ENCODE measurements at regions of chr7 and their contacts with region 1.

Region 1: GRCh38 chr7:66140924-66141323 is 26.3 kb downstream of the CRCP start:
- DNase-seq: no peak

Region 2: GRCh38 chr7:66099616-66100474 is 41.1 kb before region 1 on chr7:
- intact Hi-C with region 1: no loop called
- DNase-seq: peak; percentile 80

Region 3: DNA sequence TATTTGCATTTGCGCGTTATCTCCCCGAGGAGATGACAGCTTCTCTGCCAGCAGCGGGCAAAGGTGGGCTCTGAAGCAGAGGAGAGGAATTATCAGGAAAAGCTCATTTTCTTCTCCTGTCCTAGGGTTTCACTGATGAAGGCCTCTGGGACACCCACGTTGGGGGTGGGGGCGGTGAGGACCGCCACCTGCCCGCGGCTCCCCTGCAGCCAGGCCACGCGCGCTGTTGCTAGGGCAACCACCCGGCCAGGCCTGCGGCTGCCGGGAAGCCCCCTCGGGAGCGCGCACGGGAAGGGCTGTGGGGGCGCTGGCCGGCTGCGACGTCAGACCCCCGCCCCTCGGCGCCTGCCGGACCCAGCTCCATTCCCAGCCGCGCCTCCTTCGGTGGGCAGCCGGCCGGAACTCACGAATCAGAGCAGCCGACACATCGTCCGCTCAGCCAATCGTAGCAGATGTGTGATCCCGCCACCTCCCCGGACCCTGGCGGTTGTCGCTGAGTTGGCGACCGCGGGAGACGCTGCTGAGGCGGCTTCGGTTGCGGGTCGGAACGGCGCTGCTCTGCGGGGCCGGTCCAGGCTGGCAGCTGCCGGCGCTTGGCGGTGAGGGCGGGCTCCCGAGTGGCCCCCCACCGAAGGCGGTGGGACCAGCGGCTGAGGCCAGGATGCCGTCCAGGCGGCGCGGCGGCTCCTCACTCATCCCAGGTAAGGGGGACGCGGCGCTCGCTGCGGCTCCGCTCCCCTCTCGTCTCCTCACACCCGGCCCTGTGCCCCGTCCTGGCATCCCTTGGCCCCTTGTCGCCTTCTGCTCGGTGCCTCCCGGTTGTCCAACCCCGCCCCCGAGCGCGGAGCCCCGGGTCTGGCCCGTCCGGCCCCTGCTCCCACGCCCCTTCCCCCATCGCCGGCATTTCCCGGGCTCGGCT is 64.2 kb after region 1 on chr7 and contains the start of gene TPST1:
- intact Hi-C with region 1: loop called (anchors 5 kb)
- DNase-seq: peak; percentile 95
- total RNA-seq, gene TPST1: 4.8 TPM

Region 4: GRCh38 chr7:66413379-66414114 is 272.6 kb after region 1 on chr7:
- intact Hi-C with region 1: loop called (anchors 10 kb)
- DNase-seq: peak; percentile 92

Measured in cardiac septum (tissue), 1 donor.